ENCODE measurements at regions of chr10 and their contacts with region 1.

Region 1: GRCh38 chr10:118800920-118801319 is 46.1 kb upstream of the CACUL1 start:
- H3K4me3 Mint-ChIP-seq: no peak overlapping the region
- H3K27ac Mint-ChIP-seq: no peak overlapping the region
- H3K4me1 Mint-ChIP-seq: peaks cover 5% of the 10 kb centered on the region
- H3K27me3 Mint-ChIP-seq: peaks cover 24% of the 10 kb centered on the region

Region 2: GRCh38 chr10:118720685-118721538 is 80.0 kb before region 1 on chr10:
- intact Hi-C with region 1: loop called (anchors 2 kb)
- H3K4me3 Mint-ChIP-seq: no peak overlapping the region
- H3K27ac Mint-ChIP-seq: no peak overlapping the region
- H3K4me1 Mint-ChIP-seq: peaks cover under 1% of the 10 kb centered on the region
- H3K27me3 Mint-ChIP-seq: no peaks in the 10 kb centered on the region

Region 3: DNA sequence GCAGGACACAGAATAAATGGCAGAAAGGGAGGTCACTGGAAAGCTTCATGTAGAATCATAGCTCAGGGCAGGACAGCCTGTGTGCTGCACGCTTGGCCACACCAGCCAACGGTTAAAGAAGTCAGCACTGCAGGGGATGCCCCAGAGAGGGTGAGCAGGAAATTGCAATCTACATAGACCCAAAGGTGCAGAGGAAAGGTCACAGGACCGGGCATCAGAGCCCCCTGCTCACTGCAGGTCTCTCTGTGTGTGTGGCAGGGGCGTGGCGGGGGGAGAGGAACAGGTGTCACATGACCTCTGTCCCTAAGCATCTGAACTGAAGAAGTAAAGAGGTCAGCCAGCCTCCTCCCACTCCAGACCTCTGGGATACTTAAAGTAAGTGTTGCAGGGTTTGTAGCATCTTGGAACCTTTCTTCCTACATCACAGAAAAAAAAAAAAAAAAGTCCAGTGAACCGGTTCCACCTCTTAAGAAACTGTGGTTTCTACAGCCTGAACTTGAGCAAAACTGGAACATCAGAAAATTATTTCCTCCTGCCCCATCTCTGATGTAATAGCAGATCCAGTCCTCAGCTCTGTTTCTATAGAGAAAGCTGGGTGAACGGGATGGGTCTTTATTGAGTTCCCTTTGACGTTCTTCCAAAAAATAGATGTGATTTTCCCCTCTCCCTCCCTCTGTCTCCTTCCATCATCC is 677.3 kb after region 1 on chr10:
- intact Hi-C with region 1: no loop called
- H3K4me3 Mint-ChIP-seq: no peak overlapping the region
- H3K27ac Mint-ChIP-seq: no peak overlapping the region
- H3K4me1 Mint-ChIP-seq: peaks cover 27% of the 10 kb centered on the region
- H3K27me3 Mint-ChIP-seq: peaks cover 29% of the 10 kb centered on the region

Measured in dendritic cell treated with granulocyte-macrophage colony-stimulating factor and Interleukin-4, amounts not matched to agents 40 ng/mL and 50 ng/mL, for 4 days (primary cell).